AG04450 (cell line): ENCODE measurements at regions of chr6 and their contacts with region 1.

Region 1: DNA sequence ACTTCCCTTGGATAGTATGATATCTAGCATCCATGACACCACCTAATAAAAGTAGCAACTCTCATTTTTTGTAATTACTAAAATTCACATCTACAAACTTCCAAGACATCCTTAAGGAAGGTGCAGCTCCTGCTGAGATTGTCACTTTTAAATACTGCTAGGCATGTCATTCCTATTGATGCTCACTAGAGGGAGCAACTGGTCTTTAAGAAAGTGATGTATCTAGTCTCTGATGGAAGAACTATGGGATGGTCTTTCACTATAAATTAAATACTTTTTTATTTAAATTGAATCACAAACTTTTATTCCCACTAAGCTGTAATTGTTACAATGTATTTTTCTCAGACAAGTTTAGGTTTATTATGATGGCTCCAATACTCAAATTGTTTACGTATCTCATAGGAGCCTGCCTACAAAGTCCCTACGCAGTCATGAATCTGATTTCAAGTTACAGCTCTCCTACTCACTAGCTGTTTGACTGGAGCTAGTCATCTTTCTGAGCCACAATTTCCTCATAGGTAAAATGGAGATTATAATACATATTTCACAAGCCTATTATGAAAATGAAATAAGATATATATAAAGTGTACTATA is 8.1 kb upstream of the TSPYL1 start:
- DNase-seq: no peak
- H3K4me3 ChIP-seq: no peak overlapping the region
- H3K27ac ChIP-seq: no peak overlapping the region
- H3K27me3 ChIP-seq: no peaks in the 10 kb centered on the region
- CTCF ChIP-seq: peak; percentile 84

Region 2: GRCh38 chr6:115914098-115914497 is 373.7 kb before region 1 on chr6:
- CTCF ChIA-PET with region 1: no interaction called
- POLR2A ChIA-PET with region 1: no interaction called
- DNase-seq: no peak
- H3K4me3 ChIP-seq: no peak overlapping the region
- H3K27ac ChIP-seq: no peak overlapping the region
- H3K27me3 ChIP-seq: peaks cover 3% of the 10 kb centered on the region
- CTCF ChIP-seq: no peak

Region 3: DNA sequence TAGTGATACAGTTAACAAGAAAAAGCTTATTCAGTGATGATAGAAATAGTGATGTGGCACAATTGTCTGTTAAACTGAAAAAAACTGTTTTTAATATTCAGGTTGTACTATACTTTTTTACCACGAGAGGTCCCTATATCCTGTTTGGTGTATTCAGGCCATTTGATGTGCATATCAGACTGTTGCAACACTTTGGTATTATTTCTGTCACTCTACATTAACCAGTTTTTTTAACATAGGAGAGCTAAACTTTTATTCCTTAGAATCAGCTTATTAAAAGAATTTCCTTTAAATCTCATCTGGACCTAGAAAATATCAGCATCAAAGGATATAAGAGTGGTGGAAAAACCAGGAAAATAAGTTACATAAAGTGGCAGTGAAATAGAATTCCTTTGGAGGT is 70.7 kb before region 1 on chr6:
- CTCF ChIA-PET with region 1: interaction called, 13 read pairs
- POLR2A ChIA-PET with region 1: no interaction called
- DNase-seq: no peak
- H3K4me3 ChIP-seq: no peak overlapping the region
- H3K27ac ChIP-seq: no peak overlapping the region
- H3K27me3 ChIP-seq: no peaks in the 10 kb centered on the region
- CTCF ChIP-seq: peak; percentile 68

Region 4: GRCh38 chr6:116314878-116315277 is 27.1 kb after region 1 on chr6:
- CTCF ChIA-PET with region 1: interaction called, 14 read pairs
- POLR2A ChIA-PET with region 1: no interaction called
- DNase-seq: no peak
- H3K4me3 ChIP-seq: no peak overlapping the region
- H3K27ac ChIP-seq: no peak overlapping the region
- H3K27me3 ChIP-seq: no peaks in the 10 kb centered on the region
- CTCF ChIP-seq: no peak

Region 5: DNA sequence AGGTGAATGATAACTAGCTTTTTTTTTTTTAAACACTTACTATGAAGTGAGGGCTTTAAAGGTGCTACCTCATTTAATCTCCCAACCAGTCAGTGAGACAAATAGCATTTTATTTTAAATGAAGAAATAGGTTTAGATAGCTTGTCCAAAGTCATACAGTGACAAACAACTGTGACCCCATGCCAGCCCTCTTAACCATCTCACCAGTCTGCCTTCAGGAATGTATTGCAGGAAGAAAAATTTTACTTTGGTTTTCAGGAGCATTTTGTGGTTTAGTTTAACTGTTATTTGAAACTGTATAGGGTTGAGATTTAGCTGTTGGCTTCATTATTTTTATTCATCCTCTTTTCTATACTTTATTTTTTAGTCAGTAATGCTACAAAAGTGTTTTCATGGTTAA is 101.6 kb after region 1 on chr6:
- CTCF ChIA-PET with region 1: interaction called, 10 read pairs
- POLR2A ChIA-PET with region 1: no interaction called
- DNase-seq: no peak
- H3K4me3 ChIP-seq: no peak overlapping the region
- H3K27ac ChIP-seq: no peak overlapping the region
- H3K27me3 ChIP-seq: no peaks in the 10 kb centered on the region
- CTCF ChIP-seq: no peak

Region 6: GRCh38 chr6:116426551-116426950 is 138.8 kb after region 1 on chr6:
- CTCF ChIA-PET with region 1: interaction called, 19 read pairs
- POLR2A ChIA-PET with region 1: no interaction called
- DNase-seq: no peak
- H3K4me3 ChIP-seq: no peak overlapping the region
- H3K27ac ChIP-seq: no peak overlapping the region
- H3K27me3 ChIP-seq: no peaks in the 10 kb centered on the region
- CTCF ChIP-seq: no peak

Region 7: GRCh38 chr6:116531675-116532570 is 244.1 kb after region 1 on chr6:
- CTCF ChIA-PET with region 1: interaction called, 95 read pairs
- POLR2A ChIA-PET with region 1: no interaction called
- DNase-seq: peak; percentile 52
- H3K4me3 ChIP-seq: no peak overlapping the region
- H3K27ac ChIP-seq: no peak overlapping the region
- H3K27me3 ChIP-seq: no peaks in the 10 kb centered on the region
- CTCF ChIP-seq: peak; percentile 82

Region 8: DNA sequence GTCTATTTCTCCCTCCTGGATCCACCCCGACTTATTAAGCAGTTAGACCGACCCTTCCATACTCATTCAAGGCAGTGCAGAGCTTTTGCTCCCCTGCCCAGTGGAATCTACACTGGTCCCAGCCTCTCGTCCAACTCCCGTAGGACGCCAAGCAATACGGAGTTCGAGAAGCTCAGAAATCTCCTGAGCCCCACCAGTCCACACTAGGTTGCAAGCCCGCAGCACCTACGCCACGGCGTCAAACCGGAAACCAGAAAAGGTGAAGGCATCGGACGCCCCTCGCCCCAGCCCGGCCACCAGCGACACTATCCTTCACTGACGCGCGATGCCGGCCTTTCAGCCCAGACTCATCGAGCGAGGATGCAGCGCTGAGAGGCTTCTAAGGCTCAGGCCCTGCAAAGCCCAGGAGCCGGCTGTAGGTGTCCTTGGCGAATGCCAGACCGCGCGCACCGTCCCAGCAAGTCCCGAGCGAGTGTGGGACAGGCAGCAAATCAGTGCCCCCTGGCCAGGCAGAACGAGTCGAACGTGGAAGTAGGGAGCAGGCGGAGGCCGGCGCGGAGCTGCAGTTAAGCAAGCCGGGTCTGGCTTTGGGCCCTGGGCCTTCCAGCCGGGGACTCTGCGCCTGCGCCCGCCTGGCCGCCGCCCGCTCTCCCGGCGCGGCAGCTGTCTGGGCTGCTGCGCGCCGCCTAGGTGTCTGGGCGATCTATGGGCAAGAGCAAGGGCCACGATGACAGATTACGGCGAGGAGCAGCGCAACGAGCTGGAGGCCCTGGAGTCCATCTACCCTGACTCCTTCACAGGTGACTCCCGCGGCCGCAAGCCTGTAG is 283.3 kb after region 1 on chr6 and contains the start of gene RWDD1:
- CTCF ChIA-PET with region 1: interaction called, 19 read pairs
- POLR2A ChIA-PET with region 1: no interaction called
- DNase-seq: peak; percentile 99
- H3K4me3 ChIP-seq: peak within 1 kb of the TSS; percentile 95
- H3K27ac ChIP-seq: peak within 1 kb of the TSS; percentile 79
- H3K27me3 ChIP-seq: no peaks in the 10 kb centered on the region
- CTCF ChIP-seq: 0 out of 2 replicates have a peak, but pooled peaks have one; percentile 3
- polyA plus RNA-seq, gene RWDD1: 43.0 and 56.9 TPM in 2 replicates